ENCODE measurements at regions of chr2 and their contacts with region 1.

Region 1: GRCh38 chr2:42828487-42829425 is 36.4 kb upstream of the HAAO start:
- DNase-seq: peak; percentile 43 to 62
- ATAC-seq: peak; percentile 64 to 78
- H3K4me3 ChIP-seq: no peak overlapping the region
- H3K27ac ChIP-seq: peak overlapping the region in 1 of 4 donors; percentile 63
- H3K4me1 ChIP-seq: peaks cover 11 to 17% of the 10 kb centered on the region in 2 donors
- H3K27me3 ChIP-seq: no peaks in the 10 kb centered on the region
- CTCF ChIP-seq: peak; percentile 75 to 91 (median 87)
- POLR2A ChIP-seq: no peak

Region 2: GRCh38 chr2:42906557-42907411 is 78.0 kb after region 1 on chr2:
- in situ Hi-C with region 1: no loop called
- intact Hi-C with region 1: loop called (anchors 5 kb)
- DNase-seq: no peak
- ATAC-seq: peak; percentile 48 to 59
- H3K4me3 ChIP-seq: peak overlapping the region in 1 of 4 donors; percentile 12
- H3K27ac ChIP-seq: peak overlapping the region; percentile 56 to 73 (median 63)
- H3K4me1 ChIP-seq: peaks cover 32 to 35% of the 10 kb centered on the region in 2 donors
- H3K27me3 ChIP-seq: no peaks in the 10 kb centered on the region
- CTCF ChIP-seq: no peak
- POLR2A ChIP-seq: no peak

Region 3: GRCh38 chr2:42944779-42945415 is 116.1 kb after region 1 on chr2:
- in situ Hi-C with region 1: loop called in 2 of 4 experiments (anchors 25 kb)
- intact Hi-C with region 1: loop called (anchors 5 kb)
- DNase-seq: no peak
- ATAC-seq: no peak
- H3K4me3 ChIP-seq: no peak overlapping the region
- H3K27ac ChIP-seq: no peak overlapping the region
- H3K4me1 ChIP-seq: peaks cover 5 to 10% of the 10 kb centered on the region in 2 donors
- H3K27me3 ChIP-seq: no peaks in the 10 kb centered on the region
- CTCF ChIP-seq: no peak
- POLR2A ChIP-seq: no peak

Region 4: DNA sequence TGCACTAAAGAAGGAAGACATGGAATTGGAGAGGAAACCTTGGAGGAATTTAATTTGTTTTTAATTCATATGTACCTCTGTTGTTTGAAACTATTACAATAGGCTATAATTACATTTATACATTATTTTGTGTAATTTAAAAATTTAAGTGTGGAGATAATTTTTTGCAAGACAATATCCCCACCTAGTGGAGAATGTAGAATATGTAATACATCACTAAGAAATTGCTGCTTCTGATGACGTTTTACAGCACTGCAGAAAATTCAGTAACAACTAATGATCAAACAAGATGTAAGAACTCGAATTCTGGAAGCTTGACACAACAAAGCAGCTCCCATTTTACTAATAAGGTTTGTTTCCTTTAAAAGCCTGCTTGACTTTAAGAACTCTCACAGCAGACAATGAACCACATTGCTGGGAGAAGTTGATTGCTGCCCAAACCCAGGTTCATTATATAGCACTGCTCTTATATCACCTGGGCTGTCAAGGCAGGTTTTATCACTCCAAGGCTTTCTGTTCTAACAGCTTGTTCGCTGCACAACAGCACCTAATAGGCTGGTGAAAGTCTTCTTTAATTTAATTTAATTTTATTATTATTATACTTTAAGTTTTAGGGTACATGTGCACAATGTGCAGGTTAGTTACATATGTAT is 713.7 kb after region 1 on chr2:
- in situ Hi-C with region 1: no loop called
- intact Hi-C with region 1: loop called (anchors 2 kb)
- DNase-seq: no peak
- ATAC-seq: no peak
- H3K4me3 ChIP-seq: no peak overlapping the region
- H3K27ac ChIP-seq: no peak overlapping the region
- H3K4me1 ChIP-seq: peaks cover 6 to 11% of the 10 kb centered on the region in 2 donors
- H3K27me3 ChIP-seq: no peaks in the 10 kb centered on the region
- CTCF ChIP-seq: peak; percentile 52 to 63 (median 61)
- POLR2A ChIP-seq: no peak

Region 5: GRCh38 chr2:43576981-43577892 is 748.5 kb after region 1 on chr2:
- in situ Hi-C with region 1: loop called (anchors 10 to 25 kb)
- intact Hi-C with region 1: loop called (anchors 1 kb)
- DNase-seq: no peak
- ATAC-seq: peak in 1 of 2 donors; percentile 27
- H3K4me3 ChIP-seq: no peak overlapping the region
- H3K27ac ChIP-seq: no peak overlapping the region
- H3K4me1 ChIP-seq: peaks cover 0 to 6% of the 10 kb centered on the region in 2 donors
- H3K27me3 ChIP-seq: no peaks in the 10 kb centered on the region
- CTCF ChIP-seq: peak in 4 of 5 experiments; percentile 33 to 75 (median 54)
- POLR2A ChIP-seq: no peak

Measured in gastrocnemius medialis (tissue), 4 donors.